ENCODE measurements at regions of chr1 and their contacts with region 1.

Region 1: GRCh38 chr1:85894651-85895050 is 186.4 kb upstream of the ZNHIT6 start:
- DNase-seq: peak; percentile 15

Region 2: DNA sequence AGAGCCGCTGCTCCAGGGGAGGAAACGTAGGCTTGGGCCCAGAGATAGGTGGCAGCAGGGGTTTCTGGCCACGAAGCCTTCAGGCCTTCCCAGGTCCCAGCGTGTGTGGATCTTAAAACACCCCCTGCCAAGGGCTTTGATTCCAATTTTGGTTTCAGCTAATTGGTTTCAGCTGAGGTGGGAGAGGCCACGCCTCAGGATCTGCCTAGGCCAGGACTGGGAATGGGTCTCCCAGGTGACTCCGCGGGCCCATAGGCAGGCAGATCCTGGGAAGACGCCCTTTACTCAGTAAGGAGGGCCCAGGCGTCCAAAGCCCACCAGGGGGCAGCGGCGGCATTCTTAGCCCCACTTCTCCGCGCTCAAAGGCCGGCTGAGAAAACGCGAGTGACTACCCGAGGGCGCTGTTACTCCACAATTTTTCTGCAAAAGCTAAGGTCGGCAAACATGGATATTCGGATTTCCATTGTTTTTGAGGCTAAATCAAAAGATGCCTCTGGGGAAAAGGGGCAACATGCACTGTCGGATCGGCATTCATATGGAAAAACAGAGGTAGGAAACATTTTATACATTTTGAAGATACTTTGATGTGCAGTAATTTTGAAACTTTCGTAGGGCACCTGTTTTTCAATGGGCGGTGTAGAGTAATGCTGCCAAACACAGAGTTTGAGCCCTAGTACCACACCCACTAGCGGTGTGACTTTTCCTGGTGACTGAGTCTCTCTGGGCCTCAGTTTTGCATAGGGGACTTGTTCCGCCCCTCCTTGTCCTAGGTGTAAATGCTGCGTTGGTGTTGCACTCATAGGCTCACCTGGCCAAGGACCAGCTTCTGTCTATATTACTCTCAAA is 586.4 kb before region 1 on chr1:
- in situ Hi-C with region 1: loop called (anchors 25 kb)
- DNase-seq: peak; percentile 84

Region 3: GRCh38 chr1:85801520-85801919 is 93.1 kb before region 1 on chr1:
- in situ Hi-C with region 1: no loop called
- DNase-seq: no peak

Region 4: DNA sequence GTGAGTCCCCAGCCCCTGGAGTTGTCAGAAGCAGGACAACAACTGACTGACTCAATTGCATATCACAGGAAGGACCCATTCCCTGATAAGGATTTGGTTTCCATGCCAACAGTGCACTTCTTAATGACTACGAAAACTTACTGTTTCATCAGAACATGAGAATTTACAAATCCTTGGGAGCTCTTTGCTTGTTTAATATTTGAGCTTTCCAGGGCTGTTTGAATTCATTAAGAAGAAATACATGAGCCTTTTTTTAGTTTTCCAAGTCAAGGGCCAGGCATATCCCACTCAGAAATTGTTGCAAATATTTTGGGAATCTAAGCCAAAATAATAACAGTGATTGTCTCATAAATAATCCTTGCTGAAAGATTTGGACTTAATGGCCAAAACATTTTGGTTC is 289.2 kb after region 1 on chr1:
- in situ Hi-C with region 1: no loop called
- DNase-seq: no peak

Measured in G401 (cell line).